ENCODE measurements at regions of chr1 and their contacts with region 1.

Region 1: GRCh38 chr1:156725683-156726280 is 2.5 kb upstream of the METTL25B start:
- DNase-seq: peak; percentile 85
- H3K4me3 ChIP-seq: peak overlapping the region; percentile 9 to 14
- H3K27ac ChIP-seq: peak overlapping the region in 1 of 2 donors; percentile 20
- H3K4me1 ChIP-seq: peaks cover 29% of the 10 kb centered on the region
- H3K27me3 ChIP-seq: no peaks in the 10 kb centered on the region
- CTCF ChIP-seq: peak; percentile 88 to 97 (median 96)
- POLR2A ChIP-seq: no peak

Region 2: DNA sequence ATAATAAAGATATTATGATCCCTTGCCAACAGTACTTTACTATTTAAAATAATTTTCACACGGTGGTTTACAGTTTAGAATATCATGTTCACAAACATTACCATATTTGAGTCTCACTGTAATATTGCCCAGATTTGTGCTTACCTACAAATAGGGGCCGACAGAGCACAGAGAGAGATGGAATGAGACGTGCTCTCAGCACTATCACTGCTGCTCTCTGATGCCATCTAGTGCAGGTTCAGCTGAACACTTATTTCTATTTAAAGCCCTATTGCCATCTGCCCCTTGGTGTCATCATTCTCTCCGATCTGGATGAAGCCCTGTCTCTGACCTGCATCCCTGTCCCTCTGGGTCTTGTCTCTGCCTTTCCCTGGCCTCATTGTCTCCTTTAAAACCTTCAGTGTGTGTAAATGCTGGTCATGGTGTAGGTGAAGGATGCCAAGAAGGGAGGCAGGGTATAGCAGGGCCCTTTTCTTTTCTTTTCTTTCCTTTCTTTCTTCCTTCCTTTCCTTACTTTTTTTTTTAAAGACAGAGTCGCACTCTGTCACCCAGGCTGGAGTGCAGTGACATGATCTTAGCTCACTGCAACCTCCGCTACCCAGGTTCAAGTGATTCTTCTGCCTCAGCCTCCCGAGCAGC is 117.6 kb before region 1 on chr1:
- intact Hi-C with region 1: no loop called
- DNase-seq: peak; percentile 62
- H3K4me3 ChIP-seq: no peak overlapping the region
- H3K27ac ChIP-seq: no peak overlapping the region
- H3K4me1 ChIP-seq: no peaks in the 10 kb centered on the region
- H3K27me3 ChIP-seq: no peaks in the 10 kb centered on the region
- CTCF ChIP-seq: peak in 3 of 4 experiments; percentile 65 to 90 (median 80)
- POLR2A ChIP-seq: no peak

Region 3: GRCh38 chr1:156692925-156693847 is 32.6 kb before region 1 on chr1:
- intact Hi-C with region 1: loop called (anchors 1 kb)
- DNase-seq: peak; percentile 39
- H3K4me3 ChIP-seq: no peak overlapping the region
- H3K27ac ChIP-seq: peak overlapping the region; percentile 24 to 54
- H3K4me1 ChIP-seq: peaks cover 8% of the 10 kb centered on the region
- H3K27me3 ChIP-seq: peaks cover 4% of the 10 kb centered on the region
- CTCF ChIP-seq: no peak
- POLR2A ChIP-seq: peak; percentile 38

Measured in prostate gland (tissue), 2 donors.